ENCODE measurements at regions of chr6 and their contacts with region 1.

Region 1: GRCh38 chr6:30686908-30687658 is 638 bp upstream of the PPP1R18 start:
- DNase-seq: peak; percentile 59 to 84 (median 78)
- H3K4me3 ChIP-seq: peak overlapping the region; percentile 85 to 96 (median 89)
- H3K27ac ChIP-seq: peak overlapping the region; percentile 66 to 94
- H3K4me1 ChIP-seq: peaks cover 16 to 77% (median 73%) of the 10 kb centered on the region in 4 experiments
- H3K27me3 ChIP-seq: no peaks in the 10 kb centered on the region

Region 2: GRCh38 chr6:30533460-30534294 is 153.4 kb before region 1 on chr6:
- CTCF ChIA-PET with region 1: no interaction called
- POLR2A ChIA-PET with region 1: no interaction called
- DNase-seq: no peak
- H3K4me3 ChIP-seq: no peak overlapping the region
- H3K27ac ChIP-seq: no peak overlapping the region
- H3K4me1 ChIP-seq: peaks cover 0 to 21% (median 17%) of the 10 kb centered on the region in 4 experiments
- H3K27me3 ChIP-seq: no peaks in the 10 kb centered on the region

Region 3: DNA sequence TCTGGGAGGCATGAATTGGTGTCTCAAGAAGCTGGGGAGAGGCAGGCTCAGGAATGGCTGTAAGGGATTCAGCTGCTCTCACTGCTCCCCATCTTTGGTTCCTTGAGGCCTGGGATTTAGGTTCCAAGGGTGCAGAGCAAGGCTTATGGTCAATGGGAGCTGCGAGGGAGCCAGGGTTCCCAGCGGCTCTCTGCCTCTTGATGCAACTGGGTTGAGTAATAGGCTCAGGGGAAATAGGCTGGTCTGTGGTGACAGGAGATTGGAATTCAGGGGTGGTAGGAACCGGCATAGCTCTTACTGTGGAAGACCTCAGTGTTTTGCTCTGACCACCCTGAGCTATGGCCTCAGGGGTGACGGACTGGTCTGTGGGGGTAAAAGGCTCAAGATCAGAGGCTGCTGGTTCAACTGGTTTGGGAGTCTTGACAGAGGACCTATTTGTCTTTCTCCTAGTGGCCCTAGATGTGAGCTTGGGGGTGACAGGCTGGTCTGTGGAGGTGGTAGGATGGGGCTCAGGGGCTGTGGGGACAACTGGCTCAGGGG is 16.8 kb after region 1 on chr6:
- CTCF ChIA-PET with region 1: interaction called, 622 read pairs
- POLR2A ChIA-PET with region 1: interaction called, 3 read pairs
- DNase-seq: no peak
- H3K4me3 ChIP-seq: no peak overlapping the region
- H3K27ac ChIP-seq: no peak overlapping the region
- H3K4me1 ChIP-seq: no peaks in the 10 kb centered on the region
- H3K27me3 ChIP-seq: no peaks in the 10 kb centered on the region

Measured in common myeloid progenitor, CD34-positive (primary cell).